ENCODE measurements at regions of chr22 and their contacts with region 1.

Region 1: GRCh38 chr22:49930739-49931412 is 12.4 kb downstream of the CRELD2 start:
- DNase-seq: peak in 4 of 5 donors; percentile 75 to 81 (median 78)
- ATAC-seq: peak; percentile 26 to 71 (median 49)
- H3K4me3 ChIP-seq: no peak overlapping the region
- H3K27ac ChIP-seq: peak overlapping the region in 9 of 12 donors; percentile 4 to 69 (median 32)
- H3K4me1 ChIP-seq: peaks cover 7 to 61% (median 42%) of the 10 kb centered on the region in 12 donors
- H3K27me3 ChIP-seq: peaks cover 0 to 9% (median 5%) of the 10 kb centered on the region in 9 donors
- CTCF ChIP-seq: peak; percentile 67 to 86 (median 72)
- POLR2A ChIP-seq: no peak

Region 2: GRCh38 chr22:49767355-49768062 is 163.4 kb before region 1 on chr22:
- intact Hi-C with region 1: loop called in 3 of 10 experiments (anchors 10 kb)
- DNase-seq: peak in 2 of 5 donors; percentile 8 to 38
- ATAC-seq: no peak
- H3K4me3 ChIP-seq: no peak overlapping the region
- H3K27ac ChIP-seq: no peak overlapping the region
- H3K4me1 ChIP-seq: peaks cover 0 to 9% (median 0%) of the 10 kb centered on the region in 12 donors
- H3K27me3 ChIP-seq: no peaks in the 10 kb centered on the region
- CTCF ChIP-seq: peak; percentile 28 to 64 (median 52)
- POLR2A ChIP-seq: no peak

Region 3: DNA sequence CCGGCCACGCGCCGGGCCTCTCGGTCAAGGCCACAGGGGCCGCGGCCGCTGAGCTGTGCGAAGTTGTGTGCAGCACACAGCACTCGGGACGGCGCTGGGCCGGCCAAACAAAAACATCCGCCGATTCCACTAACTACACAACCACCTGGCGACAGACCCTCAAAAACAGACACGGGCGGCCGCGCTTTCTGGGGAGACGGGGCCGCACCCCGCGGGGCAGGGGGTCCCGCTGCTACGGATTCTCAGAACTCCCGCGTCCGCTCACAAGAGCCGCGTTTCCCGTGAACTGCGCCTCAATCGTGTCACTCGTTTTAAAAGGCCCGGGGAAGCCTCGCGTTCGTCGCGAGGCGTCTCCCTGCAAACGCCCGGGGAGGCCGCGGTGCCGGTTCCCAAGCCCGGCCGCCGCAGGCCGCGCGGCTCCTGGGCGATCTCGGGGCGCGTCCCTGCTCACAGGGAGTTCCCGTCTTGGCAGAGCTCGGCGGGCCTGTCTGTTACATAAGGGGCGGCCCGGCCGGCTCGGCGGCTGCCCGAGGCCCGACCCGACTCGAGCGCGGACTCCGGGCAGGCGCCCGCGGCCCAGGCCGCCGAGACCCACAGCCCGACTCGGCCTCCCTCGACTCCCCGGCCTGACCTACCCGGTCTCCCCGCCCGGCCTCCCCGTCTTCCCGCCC is 104.1 kb before region 1 on chr22:
- intact Hi-C with region 1: no loop called
- DNase-seq: peak in 4 of 5 donors; percentile 62 to 79 (median 64)
- ATAC-seq: peak in 3 of 4 donors; percentile 59 to 60 (median 59)
- H3K4me3 ChIP-seq: peak overlapping the region; percentile 60 to 99 (median 86)
- H3K27ac ChIP-seq: peak overlapping the region; percentile 66 to 91 (median 86)
- H3K4me1 ChIP-seq: peaks cover 10 to 40% (median 29%) of the 10 kb centered on the region in 12 donors
- H3K27me3 ChIP-seq: no peaks in the 10 kb centered on the region
- CTCF ChIP-seq: no peak
- POLR2A ChIP-seq: no peak

Region 4: GRCh38 chr22:49960159-49961004 is 29.5 kb after region 1 on chr22 and contains the start of gene PIM3:
- intact Hi-C with region 1: loop called in 7 of 10 experiments (anchors 1 to 5 kb)
- DNase-seq: peak; percentile 96 to 97 (median 96)
- ATAC-seq: peak; percentile 84 to 92 (median 88)
- H3K4me3 ChIP-seq: peak within 1 kb of the TSS; percentile 72 to 99 (median 90)
- H3K27ac ChIP-seq: peak within 1 kb of the TSS; percentile 83 to 100 (median 96)
- H3K4me1 ChIP-seq: peaks cover 16 to 58% (median 41%) of the 10 kb centered on the region in 12 donors
- H3K27me3 ChIP-seq: no peaks in the 10 kb centered on the region
- CTCF ChIP-seq: no peak
- POLR2A ChIP-seq: peak; percentile 23 to 89
- total RNA-seq, gene PIM3: 37.7 to 118 (median 51.0) TPM

Region 5: GRCh38 chr22:49979587-49980264 is 48.9 kb after region 1 on chr22:
- intact Hi-C with region 1: loop called in 4 of 10 experiments (anchors 5 kb)
- DNase-seq: peak in 3 of 5 donors; percentile 12 to 39 (median 24)
- ATAC-seq: peak in 3 of 4 donors; percentile 45 to 62 (median 53)
- H3K4me3 ChIP-seq: no peak overlapping the region
- H3K27ac ChIP-seq: no peak overlapping the region
- H3K4me1 ChIP-seq: peaks cover 0 to 18% (median 7%) of the 10 kb centered on the region in 12 donors
- H3K27me3 ChIP-seq: peaks cover 13 to 35% (median 19%) of the 10 kb centered on the region in 9 donors
- CTCF ChIP-seq: peak; percentile 42 to 66 (median 56)
- POLR2A ChIP-seq: no peak

Region 6: DNA sequence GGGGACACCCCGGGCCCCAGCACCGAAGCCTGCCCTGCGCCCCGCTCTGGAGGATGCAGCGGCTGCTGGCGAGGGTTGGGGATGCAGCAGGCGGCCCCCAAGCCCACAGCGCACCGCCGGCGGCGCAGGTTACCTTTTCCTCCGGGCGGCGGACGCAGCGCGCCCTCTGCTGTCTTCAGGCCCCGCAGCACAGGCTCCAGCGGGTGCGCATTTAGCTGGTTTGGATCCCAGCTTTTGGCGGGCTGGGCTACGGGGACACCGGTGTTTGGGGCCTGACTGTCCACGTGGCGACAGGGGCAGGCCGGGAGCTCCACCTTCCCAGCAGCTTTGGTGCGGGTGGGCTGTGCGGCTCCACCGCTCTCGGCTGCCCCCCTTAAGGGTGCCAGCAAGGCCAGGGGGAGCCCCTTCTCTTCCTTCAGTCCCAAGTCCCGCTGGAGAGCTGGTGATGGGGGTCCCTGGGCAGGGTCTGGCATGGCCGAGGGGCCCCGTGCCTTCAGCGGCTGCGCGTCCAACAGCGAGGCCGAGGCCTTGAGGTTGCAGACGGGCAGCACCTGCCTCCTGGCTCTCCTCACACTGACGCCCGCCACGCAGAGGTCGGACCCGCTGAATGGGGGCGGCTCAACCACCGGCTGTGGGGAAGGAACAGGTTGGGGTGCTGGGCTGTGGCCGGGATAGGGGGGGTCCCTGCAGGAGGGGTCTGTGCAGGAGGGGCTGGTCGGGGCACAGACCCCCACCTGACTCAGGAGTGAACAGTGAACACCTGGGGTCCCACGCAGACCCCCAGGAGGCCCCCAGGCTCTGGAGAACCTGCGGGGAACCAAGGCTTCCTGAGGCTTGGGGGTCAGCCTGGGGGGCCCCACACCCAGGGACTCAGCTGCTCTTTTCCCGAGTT is 99.7 kb after region 1 on chr22:
- intact Hi-C with region 1: loop called in 9 of 10 experiments (anchors 1 to 2 kb)
- DNase-seq: peak; percentile 51 to 87 (median 64)
- ATAC-seq: peak in 3 of 4 donors; percentile 81 to 91 (median 84)
- H3K4me3 ChIP-seq: peak overlapping the region in 1 of 12 donors; percentile 26
- H3K27ac ChIP-seq: no peak overlapping the region
- H3K4me1 ChIP-seq: peaks cover 0 to 10% (median 4%) of the 10 kb centered on the region in 12 donors
- H3K27me3 ChIP-seq: peaks cover 0 to 47% (median 11%) of the 10 kb centered on the region in 9 donors
- CTCF ChIP-seq: peak; percentile 79 to 94 (median 87)
- POLR2A ChIP-seq: no peak

Region 7: DNA sequence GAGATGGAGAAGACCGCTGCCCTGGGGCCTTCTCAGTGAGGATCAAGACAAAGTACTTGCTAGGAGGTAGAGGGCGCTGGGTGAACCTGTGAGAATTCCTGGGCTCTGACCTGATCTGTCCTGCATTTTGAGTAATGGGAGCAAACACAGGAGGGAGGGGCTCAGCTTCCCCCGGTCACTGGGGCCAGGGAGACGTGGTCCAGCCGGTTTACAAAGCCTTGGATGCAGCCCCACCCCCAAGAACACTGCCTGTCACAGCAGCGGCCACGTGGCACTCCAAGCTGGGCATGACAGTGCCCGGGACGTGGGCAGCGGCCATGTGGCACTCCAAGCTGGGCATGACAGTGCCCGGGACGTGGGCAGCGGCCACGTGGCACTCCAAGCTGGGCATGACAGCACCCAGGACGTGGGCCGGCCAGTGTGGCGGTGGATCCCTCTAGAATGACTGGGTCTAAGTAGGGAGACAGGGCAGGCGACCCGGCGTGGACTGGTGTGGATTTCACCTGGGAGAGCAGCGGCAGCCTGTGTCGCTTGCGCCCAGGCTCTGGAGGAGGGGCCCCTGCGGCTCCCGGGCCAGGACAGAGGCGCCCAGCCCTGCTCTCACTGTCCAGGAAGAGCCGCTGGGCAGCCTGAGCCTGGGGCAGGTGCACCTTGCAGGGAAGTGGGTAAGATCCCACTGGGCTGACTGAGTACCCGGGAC is 129.7 kb after region 1 on chr22:
- intact Hi-C with region 1: no loop called
- DNase-seq: peak in 1 of 5 donors; percentile 19
- ATAC-seq: no peak
- H3K4me3 ChIP-seq: no peak overlapping the region
- H3K27ac ChIP-seq: no peak overlapping the region
- H3K4me1 ChIP-seq: peaks cover 0 to 18% (median 9%) of the 10 kb centered on the region in 12 donors
- H3K27me3 ChIP-seq: peaks cover 9 to 44% (median 26%) of the 10 kb centered on the region in 9 donors
- CTCF ChIP-seq: no peak
- POLR2A ChIP-seq: no peak

Region 8: GRCh38 chr22:50101870-50102565 is 171.1 kb after region 1 on chr22:
- intact Hi-C with region 1: no loop called
- DNase-seq: no peak
- ATAC-seq: no peak
- H3K4me3 ChIP-seq: no peak overlapping the region
- H3K27ac ChIP-seq: no peak overlapping the region
- H3K4me1 ChIP-seq: peaks cover 0 to 5% (median 0%) of the 10 kb centered on the region in 12 donors
- H3K27me3 ChIP-seq: peaks cover 0 to 6% (median 0%) of the 10 kb centered on the region in 9 donors
- CTCF ChIP-seq: no peak
- POLR2A ChIP-seq: no peak

Region 9: GRCh38 chr22:50185384-50186087 is 254.7 kb after region 1 on chr22 and contains the start of gene TRABD:
- intact Hi-C with region 1: loop called in 2 of 10 experiments (anchors 10 kb)
- DNase-seq: peak; percentile 91 to 95 (median 93)
- ATAC-seq: peak; percentile 77 to 83 (median 80)
- H3K4me3 ChIP-seq: peak within 1 kb of the TSS; percentile 47 to 80 (median 68)
- H3K27ac ChIP-seq: peak within 1 kb of the TSS in 11 of 12 donors; percentile 44 to 81 (median 68)
- H3K4me1 ChIP-seq: peaks cover 8 to 67% (median 48%) of the 10 kb centered on the region in 12 donors
- H3K27me3 ChIP-seq: no peaks in the 10 kb centered on the region
- CTCF ChIP-seq: no peak
- POLR2A ChIP-seq: no peak
- total RNA-seq, gene TRABD: 14.3 to 28.1 (median 17.5) TPM

Measured in heart left ventricle (tissue), 16 donors.